Lower leg skin (tissue), 4 donors: ENCODE measurements at regions of chr2 and their contacts with region 1.

Region 1: DNA sequence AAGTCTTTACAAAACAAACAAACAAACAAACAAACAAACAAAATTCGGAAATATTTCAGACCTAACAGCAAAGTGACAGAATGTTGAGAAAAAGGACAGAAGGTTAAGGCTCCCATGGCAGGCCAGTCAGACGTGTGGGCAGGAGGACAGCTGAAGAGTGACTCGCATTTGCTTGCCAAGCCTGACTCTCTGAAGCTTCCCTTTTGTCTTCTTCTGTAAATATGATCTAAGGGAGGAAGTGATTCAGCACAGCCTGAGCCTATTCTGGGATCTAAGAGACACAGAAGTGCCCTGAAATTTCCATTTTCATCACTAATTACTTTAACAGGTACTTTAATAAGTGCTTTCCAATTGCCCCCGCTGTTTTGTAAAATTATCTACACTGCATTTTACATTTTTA is 134.0 kb upstream of the LYPD1 start:
- DNase-seq: no peak
- H3K4me3 ChIP-seq: no peak overlapping the region
- CTCF ChIP-seq: no peak
- POLR2A ChIP-seq: no peak

Region 2: DNA sequence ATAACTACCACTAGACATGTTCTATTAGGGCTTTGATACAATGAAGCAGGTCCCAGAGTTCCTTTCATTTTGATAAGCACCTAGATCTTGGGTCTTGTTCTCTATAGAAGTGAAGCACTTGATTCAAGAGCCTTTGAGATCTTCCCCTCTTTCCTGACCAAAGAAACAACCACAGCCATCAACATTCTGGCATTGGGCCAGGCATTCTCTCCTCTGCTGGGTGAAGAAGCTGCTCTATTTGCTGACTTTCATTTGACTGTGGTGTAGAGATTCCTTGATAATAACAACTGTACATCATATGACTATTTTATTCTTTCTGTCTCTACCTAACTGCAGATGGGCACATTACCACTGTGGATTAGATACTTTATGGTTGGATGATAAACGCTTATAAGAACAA is 37.5 kb before region 1 on chr2:
- intact Hi-C with region 1: loop called (anchors 1 kb)
- DNase-seq: no peak
- H3K4me3 ChIP-seq: no peak overlapping the region
- CTCF ChIP-seq: no peak
- POLR2A ChIP-seq: no peak

Region 3: DNA sequence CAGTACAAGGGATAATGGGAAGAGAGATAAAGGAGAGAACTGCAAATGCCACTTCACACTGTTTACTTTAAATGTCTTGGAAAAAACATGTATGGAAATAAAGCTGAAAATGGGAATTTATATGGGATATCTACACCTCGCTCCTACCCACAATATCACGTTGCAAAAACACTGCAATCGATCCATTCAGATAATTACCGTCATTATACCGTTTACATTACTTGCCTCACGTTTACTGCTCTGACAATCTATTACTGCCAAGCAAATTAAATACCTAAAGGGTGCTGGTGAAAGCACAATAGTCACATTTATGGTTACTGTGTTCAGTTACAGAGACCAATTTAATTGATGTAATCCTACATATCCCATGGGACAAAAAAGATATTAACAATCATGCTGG is 80.7 kb after region 1 on chr2:
- intact Hi-C with region 1: no loop called
- DNase-seq: no peak
- H3K4me3 ChIP-seq: no peak overlapping the region
- CTCF ChIP-seq: no peak
- POLR2A ChIP-seq: no peak